PC-9 (cell line): ENCODE measurements at regions of chr1 and their contacts with region 1.

Region 1: GRCh38 chr1:43073490-43074230 is 98.4 kb downstream of the EBNA1BP2 start:
- DNase-seq: peak; percentile 63 to 83
- H3K4me3 ChIP-seq: no peak overlapping the region
- H3K27ac ChIP-seq: no peak overlapping the region
- H3K4me1 ChIP-seq: peaks cover 6% of the 10 kb centered on the region; the same call in 1 of the 2 replicates
- H3K27me3 ChIP-seq: no peaks in the 10 kb centered on the region
- CTCF ChIP-seq: peak; percentile 92

Region 2: DNA sequence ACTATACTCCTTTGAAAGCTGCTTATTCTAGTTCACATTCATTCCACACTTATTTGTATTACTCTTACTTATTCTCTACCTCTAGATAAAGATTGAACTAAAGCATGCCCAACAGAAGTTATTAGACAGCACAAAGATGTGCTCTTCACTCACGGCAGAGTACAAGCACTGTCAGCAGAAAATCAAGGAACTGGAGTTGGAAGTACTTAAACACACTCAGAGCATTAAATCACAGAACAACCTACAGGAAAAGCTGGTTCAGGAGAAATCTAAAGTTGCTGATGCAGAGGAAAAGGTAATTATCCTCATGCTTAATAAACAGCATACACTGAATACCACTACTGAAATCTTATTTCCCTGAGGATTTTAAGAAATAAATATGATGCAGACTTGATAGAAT is 496.7 kb before region 1 on chr1:
- CTCF ChIA-PET with region 1: interaction called, 5 read pairs
- POLR2A ChIA-PET with region 1: no interaction called
- intact Hi-C with region 1: loop called (anchors 5 kb)
- DNase-seq: no peak
- H3K4me3 ChIP-seq: no peak overlapping the region
- H3K27ac ChIP-seq: no peak overlapping the region
- H3K4me1 ChIP-seq: no peaks in the 10 kb centered on the region
- H3K27me3 ChIP-seq: no peaks in the 10 kb centered on the region
- CTCF ChIP-seq: no peak

Region 3: GRCh38 chr1:42777852-42778251 is 295.8 kb before region 1 on chr1:
- CTCF ChIA-PET with region 1: interaction called, 13 read pairs
- POLR2A ChIA-PET with region 1: interaction called, 3 read pairs
- intact Hi-C with region 1: loop called (anchors 1 kb)
- DNase-seq: peak in 1 of 2 experiments; percentile 37
- H3K4me3 ChIP-seq: no peak overlapping the region
- H3K27ac ChIP-seq: no peak overlapping the region
- H3K4me1 ChIP-seq: no peaks in the 10 kb centered on the region
- H3K27me3 ChIP-seq: no peaks in the 10 kb centered on the region
- CTCF ChIP-seq: peak; percentile 84

Region 4: GRCh38 chr1:42913426-42914091 is 160.1 kb before region 1 on chr1:
- CTCF ChIA-PET with region 1: interaction called, 95 read pairs
- POLR2A ChIA-PET with region 1: no interaction called
- intact Hi-C with region 1: loop called (anchors 1 kb)
- DNase-seq: peak; percentile 61 to 62
- H3K4me3 ChIP-seq: no peak overlapping the region
- H3K27ac ChIP-seq: no peak overlapping the region
- H3K4me1 ChIP-seq: no peaks in the 10 kb centered on the region
- H3K27me3 ChIP-seq: no peaks in the 10 kb centered on the region
- CTCF ChIP-seq: peak; percentile 92

Region 5: DNA sequence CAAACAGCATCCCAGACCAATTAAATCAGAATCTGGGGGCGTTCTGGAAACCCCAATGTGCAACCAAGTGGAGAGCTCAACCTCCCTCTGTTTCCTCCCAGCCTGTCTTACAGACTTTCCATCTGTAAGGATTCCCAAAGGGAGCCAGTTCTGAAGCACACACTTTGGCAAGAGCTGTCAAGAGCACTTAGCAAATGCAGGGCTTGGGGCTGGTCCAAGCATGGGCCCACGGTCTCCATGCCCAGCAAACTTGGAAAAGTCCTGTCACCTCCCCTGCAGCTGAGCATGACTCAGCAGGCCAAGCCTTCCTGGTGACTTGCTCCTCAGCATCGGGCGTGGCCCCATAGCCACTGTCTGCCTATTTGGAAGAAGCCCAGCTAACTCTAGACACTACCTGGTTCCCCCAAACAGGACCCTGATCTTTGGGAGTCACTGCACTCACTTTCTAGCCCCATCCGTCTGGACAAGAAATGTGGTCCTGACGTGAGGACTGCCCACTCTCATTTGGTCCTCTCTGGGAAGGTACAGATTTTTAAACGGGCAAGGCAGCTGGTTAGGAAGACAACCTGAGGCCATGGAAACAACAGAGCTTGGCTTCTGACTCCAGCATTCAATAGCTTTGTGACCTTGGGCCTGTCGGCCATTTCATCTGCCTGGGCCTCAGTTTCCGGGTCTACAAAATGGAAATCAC is 131.9 kb before region 1 on chr1:
- CTCF ChIA-PET with region 1: interaction called, 8 read pairs
- POLR2A ChIA-PET with region 1: interaction called, 8 read pairs
- intact Hi-C with region 1: loop called (anchors 1 kb)
- DNase-seq: peak; percentile 92 to 93
- H3K4me3 ChIP-seq: peak overlapping the region; percentile 28; the same call in 1 of the 2 replicates
- H3K27ac ChIP-seq: peak overlapping the region; percentile 99
- H3K4me1 ChIP-seq: peaks cover 98% of the 10 kb centered on the region
- H3K27me3 ChIP-seq: no peaks in the 10 kb centered on the region
- CTCF ChIP-seq: no peak